CD8-positive, alpha-beta T cell (primary cell): ENCODE measurements at regions of chr4 and their contacts with region 1.

Region 1: GRCh38 chr4:80125252-80126177 is 52.5 kb upstream of the ANTXR2 start:
- DNase-seq: peak in 8 of 9 experiments; percentile 17 to 83 (median 42)
- ATAC-seq: peak; percentile 81
- H3K4me3 ChIP-seq: no peak overlapping the region
- H3K4me3 Mint-ChIP-seq: peak overlapping the region; percentile 44
- H3K27ac ChIP-seq: peak overlapping the region; percentile 56 to 84
- H3K27ac Mint-ChIP-seq: peak overlapping the region; percentile 83
- H3K4me1 ChIP-seq: peaks cover 37% of the 10 kb centered on the region
- H3K4me1 Mint-ChIP-seq: peaks cover 49% of the 10 kb centered on the region
- H3K27me3 ChIP-seq: no peaks in the 10 kb centered on the region
- H3K27me3 Mint-ChIP-seq: no peaks in the 10 kb centered on the region
- CTCF ChIP-seq: peak; percentile 72

Region 2: GRCh38 chr4:80072744-80073472 is 52.6 kb before region 1 on chr4 and contains the start of gene ANTXR2:
- CTCF ChIA-PET with region 1: interaction called, 12 read pairs
- POLR2A ChIA-PET with region 1: interaction called, 3 read pairs
- intact Hi-C with region 1: loop called (anchors 2 to 5 kb)
- DNase-seq: peak; percentile 35 to 82 (median 70)
- ATAC-seq: peak; percentile 77
- H3K4me3 ChIP-seq: peak within 1 kb of the TSS; percentile 79 to 80
- H3K4me3 Mint-ChIP-seq: peak within 1 kb of the TSS; percentile 97
- H3K27ac ChIP-seq: peak within 1 kb of the TSS; percentile 69 to 70
- H3K27ac Mint-ChIP-seq: peak within 1 kb of the TSS; percentile 96
- H3K4me1 ChIP-seq: peaks cover 30% of the 10 kb centered on the region
- H3K4me1 Mint-ChIP-seq: peaks cover 53% of the 10 kb centered on the region
- H3K27me3 ChIP-seq: no peaks in the 10 kb centered on the region
- H3K27me3 Mint-ChIP-seq: no peaks in the 10 kb centered on the region
- CTCF ChIP-seq: no peak
- total RNA-seq, gene ANTXR2: 6.9 to 8.6 TPM

Region 3: DNA sequence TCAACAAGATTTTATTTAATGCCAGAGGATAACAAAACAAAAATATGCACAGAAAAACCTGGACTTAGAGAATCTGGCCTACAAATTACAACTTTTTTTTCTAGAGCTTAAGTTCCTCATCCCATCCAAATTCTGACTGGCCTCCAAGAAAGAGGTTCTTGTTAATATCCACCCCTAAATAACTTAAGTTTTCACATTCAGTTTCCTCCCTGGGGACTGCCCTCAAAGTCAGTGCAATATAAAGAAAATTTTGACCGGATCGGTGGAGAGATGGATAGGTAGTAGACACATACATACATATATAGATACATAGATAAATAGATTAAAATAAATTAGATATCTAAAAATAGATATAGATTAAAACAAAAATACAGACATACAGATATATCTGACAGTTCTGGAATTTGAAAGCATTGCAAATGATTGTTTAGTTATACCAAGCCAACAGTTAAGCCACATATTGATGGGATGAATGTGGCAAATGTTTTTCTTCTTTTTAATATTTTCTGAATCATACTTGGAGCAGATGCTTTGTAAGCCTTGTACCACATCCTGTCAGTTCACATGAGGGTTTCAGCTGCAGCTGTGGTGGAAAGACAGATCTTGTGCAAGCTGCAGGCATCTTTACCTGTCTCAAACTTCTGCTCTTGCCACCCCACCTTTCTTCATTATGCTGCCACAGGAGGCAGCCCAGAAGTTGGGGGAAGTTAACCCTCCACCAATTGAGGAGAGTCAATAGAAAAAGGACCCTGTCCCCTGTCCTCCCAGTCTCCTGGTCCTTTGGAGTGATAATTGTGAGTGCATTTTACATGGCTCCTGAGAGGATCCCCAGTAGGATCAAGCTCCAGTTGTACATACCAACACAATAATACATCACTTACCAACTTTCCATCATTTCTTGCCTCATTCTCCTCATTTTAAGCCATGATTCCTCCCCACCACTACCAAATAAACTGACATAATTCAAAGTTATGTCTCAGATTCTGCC is 13.3 kb after region 1 on chr4:
- CTCF ChIA-PET with region 1: interaction called, 51 read pairs
- POLR2A ChIA-PET with region 1: no interaction called
- intact Hi-C with region 1: loop called in 1 of 2 experiments (anchors 1 kb)
- DNase-seq: peak in 8 of 9 experiments; percentile 36 to 74 (median 62)
- ATAC-seq: peak; percentile 95
- H3K4me3 ChIP-seq: no peak overlapping the region
- H3K4me3 Mint-ChIP-seq: no peak overlapping the region
- H3K27ac ChIP-seq: peak overlapping the region in 1 of 2 experiments; percentile 21
- H3K27ac Mint-ChIP-seq: peak overlapping the region; percentile 70
- H3K4me1 ChIP-seq: peaks cover 20% of the 10 kb centered on the region
- H3K4me1 Mint-ChIP-seq: peaks cover 46% of the 10 kb centered on the region
- H3K27me3 ChIP-seq: no peaks in the 10 kb centered on the region
- H3K27me3 Mint-ChIP-seq: no peaks in the 10 kb centered on the region
- CTCF ChIP-seq: no peak

Region 4: GRCh38 chr4:80173401-80173800 is 47.9 kb after region 1 on chr4:
- CTCF ChIA-PET with region 1: interaction called, 222 read pairs
- POLR2A ChIA-PET with region 1: interaction called, 7 read pairs
- intact Hi-C with region 1: loop called in 1 of 2 experiments (anchors 2 kb)
- DNase-seq: peak in 8 of 9 experiments; percentile 34 to 89 (median 62)
- ATAC-seq: peak; percentile 96
- H3K4me3 ChIP-seq: peak overlapping the region in 1 of 2 experiments; percentile 1
- H3K4me3 Mint-ChIP-seq: peak overlapping the region; percentile 36
- H3K27ac ChIP-seq: peak overlapping the region; percentile 3 to 68
- H3K27ac Mint-ChIP-seq: peak overlapping the region; percentile 95
- H3K4me1 ChIP-seq: peaks cover 33% of the 10 kb centered on the region
- H3K4me1 Mint-ChIP-seq: peaks cover 55% of the 10 kb centered on the region
- H3K27me3 ChIP-seq: no peaks in the 10 kb centered on the region
- H3K27me3 Mint-ChIP-seq: no peaks in the 10 kb centered on the region
- CTCF ChIP-seq: no peak

Region 5: GRCh38 chr4:80196922-80197573 is 71.5 kb after region 1 on chr4 and contains the start of gene PRDM8:
- CTCF ChIA-PET with region 1: interaction called, 31 read pairs
- POLR2A ChIA-PET with region 1: interaction called, 18 read pairs
- intact Hi-C with region 1: loop called in 1 of 2 experiments (anchors 2 kb)
- DNase-seq: peak in 4 of 9 experiments; percentile 37 to 65 (median 50)
- ATAC-seq: peak; percentile 57
- H3K4me3 ChIP-seq: peak within 1 kb of the TSS; percentile 24 to 26
- H3K4me3 Mint-ChIP-seq: peak within 1 kb of the TSS; percentile 64
- H3K27ac ChIP-seq: no peak within 1 kb of the TSS
- H3K27ac Mint-ChIP-seq: no peak within 1 kb of the TSS
- H3K4me1 ChIP-seq: peaks cover 30% of the 10 kb centered on the region
- H3K4me1 Mint-ChIP-seq: peaks cover 33% of the 10 kb centered on the region
- H3K27me3 ChIP-seq: peaks cover 11 to 20% of the 10 kb centered on the region in 2 experiments
- H3K27me3 Mint-ChIP-seq: peaks cover 37% of the 10 kb centered on the region
- CTCF ChIP-seq: no peak
- total RNA-seq, gene PRDM8: 5.2 to 6.0 TPM

Region 6: DNA sequence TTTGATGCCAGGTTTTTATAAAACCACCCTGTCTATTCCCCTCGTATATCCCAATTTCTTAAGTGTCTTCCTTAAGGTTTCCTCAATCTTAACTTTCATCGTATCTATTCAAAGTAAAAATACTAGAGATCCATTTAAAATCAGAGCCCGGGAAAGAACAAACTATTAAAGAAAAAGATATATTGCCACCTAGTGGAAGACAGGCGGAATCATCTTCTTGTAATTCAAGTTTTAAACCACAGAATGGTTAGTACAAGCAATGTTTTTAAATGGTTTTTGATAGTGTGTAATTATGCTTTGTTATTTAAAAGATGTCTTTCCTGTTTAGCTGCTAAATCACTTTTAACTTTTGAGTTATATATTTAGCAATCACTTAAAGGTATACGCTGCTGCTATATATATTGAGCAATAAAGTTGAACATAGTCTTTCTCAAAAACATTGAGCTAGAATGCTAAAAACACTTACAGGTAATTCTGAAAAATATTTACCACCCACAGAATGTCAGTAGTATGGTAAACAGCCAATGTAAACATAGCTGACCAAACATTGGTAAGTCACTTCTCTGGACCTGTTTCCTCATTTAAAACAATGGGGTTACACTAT is 90.0 kb after region 1 on chr4:
- CTCF ChIA-PET with region 1: interaction called, 22 read pairs
- POLR2A ChIA-PET with region 1: no interaction called
- intact Hi-C with region 1: loop called (anchors 1 kb)
- DNase-seq: peak in 2 of 9 experiments; percentile 28 to 56
- ATAC-seq: no peak
- H3K4me3 ChIP-seq: no peak overlapping the region
- H3K4me3 Mint-ChIP-seq: no peak overlapping the region
- H3K27ac ChIP-seq: no peak overlapping the region
- H3K27ac Mint-ChIP-seq: no peak overlapping the region
- H3K4me1 ChIP-seq: no peaks in the 10 kb centered on the region
- H3K4me1 Mint-ChIP-seq: peaks cover 1% of the 10 kb centered on the region
- H3K27me3 ChIP-seq: no peaks in the 10 kb centered on the region
- H3K27me3 Mint-ChIP-seq: peaks cover 25% of the 10 kb centered on the region
- CTCF ChIP-seq: peak; percentile 91